Activated T-helper 1 cell treated with anti-CD3 and anti-CD28 coated beads, Interleukin-12 subunit alpha, Interleukin-12 subunit beta, Interleukin-2, Interleukin-4 antibody, amounts not matched to agents 30 ng/mL and 10 ng/mL and 1 ng/mL, durations not matched to agents 14 hours and 24 hours and 36 hours (primary cell): ENCODE measurements at regions of chr14 and their contacts with region 1.

Region 1: DNA sequence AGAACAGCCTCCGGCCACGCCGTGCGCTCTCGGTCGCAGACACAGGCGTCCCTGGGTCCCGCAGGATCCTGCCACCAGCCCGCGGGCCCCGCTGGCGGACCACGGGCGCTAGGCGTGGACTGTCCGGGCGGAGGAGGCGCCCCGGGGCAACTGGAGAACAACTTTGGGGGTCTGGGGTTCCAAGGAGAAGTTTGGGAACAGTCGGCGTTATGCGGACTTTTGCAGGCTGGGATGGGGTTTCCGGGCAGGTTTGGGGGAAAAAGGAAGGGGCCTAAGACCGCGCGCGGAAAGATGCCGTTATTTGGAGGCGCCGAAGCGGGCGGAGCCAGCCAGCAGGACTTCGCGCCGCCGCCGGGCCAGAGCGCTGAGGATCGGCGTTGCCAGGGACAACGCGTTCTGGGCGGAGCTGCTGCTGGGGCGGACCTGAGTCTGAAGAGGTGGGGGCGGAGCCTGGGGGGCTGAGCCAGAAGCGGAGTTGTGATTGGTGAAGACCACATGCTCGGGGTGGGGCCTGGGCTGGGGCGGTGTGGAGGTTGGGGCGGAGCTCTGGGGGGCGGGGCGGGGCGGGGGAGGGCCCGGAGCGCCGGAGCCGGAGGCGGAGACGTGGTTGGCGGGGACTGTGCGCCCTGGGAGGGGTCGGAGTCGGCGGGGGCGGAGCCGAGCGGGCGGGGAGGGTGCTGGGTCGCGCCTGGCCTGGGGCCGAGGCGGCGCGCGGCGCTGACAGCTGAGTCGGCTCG is at the start of gene CYP46A1:
- DNase-seq: peak; percentile 99
- H3K4me3 Mint-ChIP-seq: peak within 1 kb of the TSS; percentile 87
- H3K27ac Mint-ChIP-seq: peak within 1 kb of the TSS; percentile 87
- H3K4me1 Mint-ChIP-seq: peaks cover 5% of the 10 kb centered on the region
- H3K27me3 Mint-ChIP-seq: peaks cover 31% of the 10 kb centered on the region
- total RNA-seq, gene CYP46A1: 0.27 TPM in 1 of 2 replicates, not detected in the other

Region 2: DNA sequence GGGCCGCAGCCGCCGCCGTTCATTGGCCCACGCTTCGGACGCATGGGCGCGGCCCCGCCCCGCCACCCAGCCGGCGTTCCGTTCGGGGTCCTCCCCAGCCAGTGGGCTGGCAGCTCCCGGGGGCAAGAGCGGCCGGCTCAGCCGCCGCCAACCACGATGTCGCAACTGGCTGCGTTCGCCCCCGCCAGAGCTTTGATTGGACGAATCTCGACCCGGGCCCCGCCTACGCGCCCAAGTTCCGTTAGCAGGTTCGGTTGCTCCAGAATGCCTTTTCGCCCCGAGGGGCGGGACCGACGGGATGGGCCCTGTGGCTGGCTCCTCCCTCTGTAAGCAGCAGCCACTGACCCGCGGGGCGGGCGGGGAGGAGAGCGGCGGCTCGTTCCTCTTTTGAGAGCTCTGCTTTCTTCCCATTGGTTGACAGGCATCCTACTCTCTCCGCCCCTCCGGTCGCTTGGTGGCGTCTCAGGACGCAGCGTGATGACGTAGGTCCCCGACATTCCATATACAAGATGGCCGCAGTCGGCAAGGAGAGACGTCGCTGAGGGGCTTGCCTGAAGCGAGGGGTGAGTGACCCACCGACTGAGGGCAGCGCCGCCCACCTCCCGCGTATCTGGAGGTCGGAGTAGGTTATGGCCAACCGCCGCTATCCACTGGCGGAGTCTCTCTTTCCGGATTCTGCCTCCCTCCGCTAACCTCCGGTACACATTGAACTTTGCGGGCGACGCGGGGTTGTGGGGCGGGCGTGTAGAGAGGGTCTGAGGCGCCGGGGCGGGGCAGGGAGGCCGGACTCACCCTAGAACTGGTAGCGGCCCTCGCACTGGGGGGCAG is 202.7 kb before region 1 on chr14 and contains the start of gene CCNK:
- intact Hi-C with region 1: loop called (anchors 1 kb)
- DNase-seq: peak; percentile 100
- H3K4me3 Mint-ChIP-seq: peak within 1 kb of the TSS; percentile 98
- H3K27ac Mint-ChIP-seq: peak within 1 kb of the TSS; percentile 98
- H3K4me1 Mint-ChIP-seq: peaks cover 49% of the 10 kb centered on the region
- H3K27me3 Mint-ChIP-seq: no peaks in the 10 kb centered on the region
- total RNA-seq, gene CCNK: 80.8 and 87.1 TPM in 2 replicates

Region 3: DNA sequence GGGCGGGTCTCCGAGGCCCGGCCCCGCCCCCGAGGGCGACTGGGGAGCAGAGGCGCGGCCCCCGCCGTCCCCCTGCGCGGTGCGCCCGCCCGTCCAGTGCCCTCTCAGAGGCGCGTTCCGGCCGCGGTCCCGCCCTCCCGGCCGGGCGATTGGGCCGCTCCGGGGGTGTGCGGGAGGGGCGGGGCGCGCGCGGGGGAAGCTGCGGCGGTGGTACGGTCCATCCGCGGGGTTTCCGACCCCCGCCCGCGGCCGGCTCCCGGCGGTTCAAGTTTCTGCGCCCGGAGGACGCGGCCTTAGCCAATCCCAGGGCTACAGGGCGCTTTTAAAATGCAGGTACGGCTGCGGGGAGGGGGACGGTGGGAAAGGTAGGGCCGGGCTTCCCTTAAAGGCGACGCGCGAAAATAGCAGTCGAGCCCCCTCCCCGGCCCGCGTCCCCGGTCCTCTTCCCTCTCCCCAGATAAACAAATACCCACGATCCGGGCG is 79.5 kb before region 1 on chr14:
- intact Hi-C with region 1: loop called (anchors 1 kb)
- DNase-seq: peak; percentile 96
- H3K4me3 Mint-ChIP-seq: peak overlapping the region; percentile 88
- H3K27ac Mint-ChIP-seq: peak overlapping the region; percentile 88
- H3K4me1 Mint-ChIP-seq: peaks cover 24% of the 10 kb centered on the region
- H3K27me3 Mint-ChIP-seq: peaks cover 12% of the 10 kb centered on the region

Region 4: GRCh38 chr14:99793213-99794150 is 109.7 kb after region 1 on chr14 and contains the start of gene EML1:
- intact Hi-C with region 1: loop called (anchors 5 kb)
- DNase-seq: peak; percentile 69
- H3K4me3 Mint-ChIP-seq: peak within 1 kb of the TSS; percentile 69
- H3K27ac Mint-ChIP-seq: peak within 1 kb of the TSS; percentile 77
- H3K4me1 Mint-ChIP-seq: peaks cover 20% of the 10 kb centered on the region
- H3K27me3 Mint-ChIP-seq: peaks cover 64% of the 10 kb centered on the region
- total RNA-seq, gene EML1: 0.76 and 0.91 TPM in 2 replicates

Region 5: GRCh38 chr14:99884834-99885648 is 201.3 kb after region 1 on chr14:
- intact Hi-C with region 1: loop called (anchors 1 kb)
- DNase-seq: no peak
- H3K4me3 Mint-ChIP-seq: no peak overlapping the region
- H3K27ac Mint-ChIP-seq: no peak overlapping the region
- H3K4me1 Mint-ChIP-seq: no peaks in the 10 kb centered on the region
- H3K27me3 Mint-ChIP-seq: peaks cover 8% of the 10 kb centered on the region